PC-3 (cell line): ENCODE measurements at regions of chr13 and their contacts with region 1.

Region 1: DNA sequence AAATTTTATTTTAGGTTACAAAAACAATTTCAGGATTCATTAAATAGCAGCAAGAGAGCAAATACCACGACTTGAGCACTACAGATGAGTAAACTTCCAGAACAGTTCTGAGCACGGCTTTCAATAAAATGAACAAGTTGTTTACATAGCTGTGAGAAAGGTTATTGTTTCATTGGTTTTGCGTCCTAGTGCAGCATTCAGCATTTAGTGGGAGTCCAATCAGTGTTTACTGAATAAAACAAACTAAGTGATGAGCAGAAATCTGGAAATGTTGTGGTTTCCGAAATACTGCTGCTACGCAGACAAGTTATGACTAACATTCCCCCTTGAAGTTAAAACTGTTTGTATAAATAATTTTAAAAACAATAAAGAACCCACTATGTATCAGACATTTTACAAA is 251.5 kb upstream of the STARD13 start:
- DNase-seq: peak; percentile 88
- ATAC-seq: peak; percentile 98
- H3K4me3 ChIP-seq: peak overlapping the region; percentile 53; the same call in 1 of the 2 replicates
- H3K27ac ChIP-seq: peak overlapping the region; percentile 98
- H3K4me1 ChIP-seq: peaks cover 34% of the 10 kb centered on the region
- H3K27me3 ChIP-seq: no peaks in the 10 kb centered on the region
- CTCF ChIP-seq: no peak

Region 2: DNA sequence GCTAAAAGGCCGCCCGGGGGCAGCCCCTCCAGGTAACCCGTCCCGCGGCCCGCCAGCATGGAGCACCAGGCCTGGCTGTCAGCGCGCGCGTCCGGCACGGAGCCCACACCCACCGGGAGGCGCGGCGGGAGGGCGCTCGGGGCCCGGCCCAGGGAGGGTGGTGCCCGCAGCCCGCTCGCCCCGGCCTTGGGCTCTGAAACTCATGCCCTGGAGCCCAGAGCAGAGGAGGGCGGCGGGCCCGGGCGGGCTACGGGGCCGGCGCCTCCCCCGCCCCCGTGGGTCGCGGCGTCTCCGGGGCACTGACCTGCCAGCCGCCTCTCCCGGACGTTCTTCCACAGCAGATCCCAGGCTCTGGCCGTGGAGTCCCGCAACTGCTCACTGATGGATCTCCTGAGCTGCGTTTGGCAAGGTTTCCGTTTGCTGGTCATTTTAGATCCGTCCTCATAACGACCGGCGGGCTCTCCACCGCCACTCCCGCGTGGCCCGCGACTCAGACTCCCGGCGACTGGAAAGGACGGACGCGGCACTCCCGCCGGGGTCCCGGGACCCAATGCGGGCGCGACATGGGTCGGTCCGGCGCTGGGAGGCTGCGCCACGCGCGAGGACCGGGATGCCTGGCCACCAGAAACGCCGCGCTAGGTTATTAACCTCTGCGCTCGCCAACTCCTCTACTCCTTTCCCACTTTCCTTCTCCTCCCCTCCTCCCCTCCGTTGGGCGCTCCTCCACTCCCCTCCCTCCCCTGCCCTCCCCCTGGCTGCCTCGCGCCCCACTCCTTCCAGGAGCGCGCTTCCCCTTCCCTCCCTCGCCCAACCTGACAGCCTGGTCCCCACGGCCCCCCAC is 186.8 kb before region 1 on chr13:
- CTCF ChIA-PET with region 1: no interaction called
- POLR2A ChIA-PET with region 1: interaction called, 4 read pairs
- intact Hi-C with region 1: loop called (anchors 1 kb)
- DNase-seq: peak; percentile 37
- ATAC-seq: peak; percentile 62
- H3K4me3 ChIP-seq: peak overlapping the region; percentile 96
- H3K27ac ChIP-seq: peak overlapping the region; percentile 26
- H3K4me1 ChIP-seq: peaks cover 31% of the 10 kb centered on the region
- H3K27me3 ChIP-seq: no peaks in the 10 kb centered on the region
- CTCF ChIP-seq: no peak

Region 3: DNA sequence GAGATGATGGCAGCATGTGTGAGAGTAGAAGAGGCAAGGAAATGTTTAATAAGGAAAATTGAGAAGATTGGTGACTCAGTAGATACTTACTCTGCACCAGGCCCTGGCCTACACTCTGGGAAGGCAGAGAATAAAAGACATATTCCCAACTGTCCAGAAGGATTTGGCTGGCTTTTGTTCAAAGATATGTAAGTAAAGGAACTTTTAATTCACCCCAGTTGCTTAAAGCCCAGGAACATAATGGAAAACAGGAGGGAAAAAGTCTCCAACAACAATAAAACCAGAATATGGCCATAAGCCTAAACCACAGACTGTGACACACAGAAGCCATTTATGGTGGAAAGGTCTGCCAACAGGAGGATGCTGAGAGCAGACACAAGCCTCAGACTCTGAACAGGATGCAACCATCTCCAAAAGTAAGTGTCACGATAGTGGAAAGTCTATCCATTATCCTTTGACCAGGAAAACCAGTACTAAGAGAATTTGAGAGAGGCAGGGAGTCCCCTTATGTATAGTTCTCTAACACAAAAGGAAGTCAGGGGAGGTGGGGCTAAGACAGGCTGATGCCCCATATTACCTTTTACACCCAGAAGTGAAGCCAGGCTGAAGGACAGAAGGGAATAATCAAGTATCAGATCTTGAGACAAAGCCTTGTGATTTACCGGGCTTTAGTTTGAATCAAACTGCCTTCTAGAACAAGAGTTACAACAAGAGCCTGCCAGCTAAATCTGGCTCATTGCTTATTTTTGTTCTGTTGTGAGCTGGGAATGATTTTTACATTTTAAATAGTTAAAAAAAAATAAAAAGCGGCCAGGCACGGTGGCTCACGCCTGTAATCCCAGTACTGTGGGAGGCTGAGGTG is 82.0 kb before region 1 on chr13:
- CTCF ChIA-PET with region 1: no interaction called
- POLR2A ChIA-PET with region 1: no interaction called
- intact Hi-C with region 1: loop called (anchors 2 kb)
- DNase-seq: peak; percentile 56
- ATAC-seq: peak; percentile 73
- H3K4me3 ChIP-seq: no peak overlapping the region
- H3K27ac ChIP-seq: peak overlapping the region; percentile 46
- H3K4me1 ChIP-seq: peaks cover 21% of the 10 kb centered on the region
- H3K27me3 ChIP-seq: no peaks in the 10 kb centered on the region
- CTCF ChIP-seq: no peak

Region 4: DNA sequence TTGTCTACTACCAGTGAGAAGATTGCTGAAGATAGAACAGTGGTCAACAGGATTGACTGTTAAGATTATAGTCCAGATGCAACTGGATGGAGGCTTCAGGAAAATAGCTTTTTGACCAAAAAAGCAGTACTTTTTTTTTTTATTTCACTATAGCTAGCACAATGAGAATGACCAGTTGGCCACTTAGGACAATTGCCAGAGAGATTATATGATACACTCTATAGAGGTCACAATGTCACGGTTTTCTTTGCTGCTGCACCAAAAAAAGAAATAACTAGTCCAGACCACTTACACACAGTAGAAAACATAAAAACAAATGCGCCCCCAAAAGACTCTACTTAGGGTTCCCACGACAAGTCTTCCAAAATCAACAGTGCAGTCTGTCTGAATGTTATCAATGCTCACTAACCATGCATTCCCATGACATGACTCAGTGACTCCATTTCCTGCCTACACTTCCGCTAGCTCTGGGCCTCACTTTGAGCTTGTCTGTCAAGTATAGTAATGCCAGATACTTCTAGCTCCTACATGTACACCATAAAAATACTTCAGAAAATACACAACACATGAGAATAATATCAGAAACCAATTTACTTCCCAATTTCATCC is 42.3 kb before region 1 on chr13:
- CTCF ChIA-PET with region 1: no interaction called
- POLR2A ChIA-PET with region 1: no interaction called
- intact Hi-C with region 1: loop called (anchors 5 kb)
- DNase-seq: peak; percentile 86
- ATAC-seq: peak; percentile 81
- H3K4me3 ChIP-seq: no peak overlapping the region
- H3K27ac ChIP-seq: peak overlapping the region; percentile 85
- H3K4me1 ChIP-seq: peaks cover 35% of the 10 kb centered on the region
- H3K27me3 ChIP-seq: no peaks in the 10 kb centered on the region
- CTCF ChIP-seq: no peak

Region 5: DNA sequence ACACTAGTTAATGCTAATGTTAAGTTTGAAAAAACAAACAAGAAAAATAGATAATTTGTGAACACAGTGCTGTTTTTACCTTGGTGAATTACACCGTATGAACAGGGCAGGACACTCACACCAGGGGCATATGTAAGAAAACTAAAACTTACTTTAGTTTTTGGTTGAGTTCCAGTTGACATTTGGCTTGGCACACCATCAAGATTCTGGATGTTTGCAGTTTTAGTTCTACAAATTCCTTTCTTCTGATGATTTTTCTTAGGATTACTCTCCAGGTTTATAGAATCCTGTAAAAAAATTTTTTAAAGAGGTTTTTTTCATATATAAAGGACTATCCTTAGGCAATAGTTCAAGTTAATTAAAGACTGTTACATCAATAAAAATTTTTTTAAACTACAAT is 12.9 kb before region 1 on chr13:
- CTCF ChIA-PET with region 1: no interaction called
- POLR2A ChIA-PET with region 1: no interaction called
- intact Hi-C with region 1: loop called (anchors 1 kb)
- DNase-seq: peak; percentile 93
- ATAC-seq: peak; percentile 82
- H3K4me3 ChIP-seq: no peak overlapping the region
- H3K27ac ChIP-seq: peak overlapping the region; percentile 52
- H3K4me1 ChIP-seq: peaks cover 21% of the 10 kb centered on the region
- H3K27me3 ChIP-seq: no peaks in the 10 kb centered on the region
- CTCF ChIP-seq: no peak

Region 6: DNA sequence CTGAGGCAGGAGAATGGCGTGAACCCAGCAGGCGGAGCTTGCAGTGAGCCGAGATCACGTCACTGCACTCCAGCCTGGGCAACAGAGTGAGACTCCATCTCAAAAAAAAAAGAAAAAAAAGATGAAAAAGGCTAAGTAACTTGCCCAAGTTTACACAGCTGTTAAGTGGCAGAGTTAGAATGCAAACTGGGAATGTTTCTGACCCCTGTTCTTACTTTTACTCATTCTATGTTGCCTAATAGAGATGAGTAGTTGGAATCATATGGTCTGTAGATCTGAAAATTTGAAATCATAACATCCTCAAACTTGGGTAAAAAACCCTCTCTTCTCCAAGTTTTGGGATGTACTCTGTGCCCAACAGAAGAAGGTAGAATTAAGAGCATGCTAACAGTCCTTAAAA is 45.1 kb after region 1 on chr13:
- CTCF ChIA-PET with region 1: no interaction called
- POLR2A ChIA-PET with region 1: no interaction called
- intact Hi-C with region 1: no loop called
- DNase-seq: no peak
- ATAC-seq: no peak
- H3K4me3 ChIP-seq: no peak overlapping the region
- H3K27ac ChIP-seq: no peak overlapping the region
- H3K4me1 ChIP-seq: no peaks in the 10 kb centered on the region
- H3K27me3 ChIP-seq: no peaks in the 10 kb centered on the region
- CTCF ChIP-seq: no peak

Region 7: DNA sequence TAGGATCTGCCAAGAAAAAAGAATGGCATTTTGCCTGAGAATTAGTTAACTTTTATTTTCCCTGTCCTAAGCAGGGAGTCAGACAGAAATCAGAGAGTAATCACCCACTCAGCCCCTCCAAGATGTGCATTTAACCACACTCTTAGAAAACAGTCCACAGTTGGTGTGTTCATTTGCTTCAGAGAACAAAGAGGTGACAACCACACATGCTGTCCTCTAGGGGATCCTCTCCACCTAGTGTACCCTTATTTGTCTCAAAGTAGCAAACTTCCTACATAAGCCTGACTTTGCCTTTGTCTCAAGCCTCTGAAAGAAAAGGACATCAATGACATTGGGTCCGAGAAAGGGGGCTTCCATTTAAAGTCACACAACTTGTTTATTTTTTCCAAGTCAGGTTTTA is 173.9 kb after region 1 on chr13:
- CTCF ChIA-PET with region 1: no interaction called
- POLR2A ChIA-PET with region 1: no interaction called
- intact Hi-C with region 1: no loop called
- DNase-seq: no peak
- ATAC-seq: no peak
- H3K4me3 ChIP-seq: no peak overlapping the region
- H3K27ac ChIP-seq: no peak overlapping the region
- H3K4me1 ChIP-seq: no peaks in the 10 kb centered on the region
- H3K27me3 ChIP-seq: no peaks in the 10 kb centered on the region
- CTCF ChIP-seq: no peak